Activated CD8-positive, alpha-beta T cell treated with anti-CD3 and anti-CD28 coated beads for 36 hours (primary cell): ENCODE measurements at regions of chr10 and their contacts with region 1.

Region 1: GRCh38 chr10:23702977-23703414 is 264.1 kb downstream of the OTUD1 start:
- DNase-seq: peak; percentile 78
- ATAC-seq: peak; percentile 90
- H3K4me3 Mint-ChIP-seq: no peak overlapping the region
- H3K27ac Mint-ChIP-seq: no peak overlapping the region
- H3K4me1 Mint-ChIP-seq: no peaks in the 10 kb centered on the region
- H3K27me3 Mint-ChIP-seq: peaks cover 19% of the 10 kb centered on the region
- CTCF ChIP-seq: peak; percentile 71

Region 2: GRCh38 chr10:23516530-23516929 is 186.5 kb before region 1 on chr10:
- CTCF ChIA-PET with region 1: interaction called, 12 read pairs
- POLR2A ChIA-PET with region 1: no interaction called
- intact Hi-C with region 1: loop called (anchors 5 kb)
- DNase-seq: no peak
- ATAC-seq: no peak
- H3K4me3 Mint-ChIP-seq: no peak overlapping the region
- H3K27ac Mint-ChIP-seq: no peak overlapping the region
- H3K4me1 Mint-ChIP-seq: peaks cover 23% of the 10 kb centered on the region
- H3K27me3 Mint-ChIP-seq: peaks cover 14% of the 10 kb centered on the region
- CTCF ChIP-seq: peak; percentile 49

Region 3: GRCh38 chr10:23535381-23535780 is 167.6 kb before region 1 on chr10:
- CTCF ChIA-PET with region 1: no interaction called
- POLR2A ChIA-PET with region 1: no interaction called
- intact Hi-C with region 1: loop called (anchors 5 kb)
- DNase-seq: no peak
- ATAC-seq: no peak
- H3K4me3 Mint-ChIP-seq: peak overlapping the region; percentile 33
- H3K27ac Mint-ChIP-seq: peak overlapping the region; percentile 78
- H3K4me1 Mint-ChIP-seq: peaks cover 72% of the 10 kb centered on the region
- H3K27me3 Mint-ChIP-seq: no peaks in the 10 kb centered on the region
- CTCF ChIP-seq: no peak

Region 4: DNA sequence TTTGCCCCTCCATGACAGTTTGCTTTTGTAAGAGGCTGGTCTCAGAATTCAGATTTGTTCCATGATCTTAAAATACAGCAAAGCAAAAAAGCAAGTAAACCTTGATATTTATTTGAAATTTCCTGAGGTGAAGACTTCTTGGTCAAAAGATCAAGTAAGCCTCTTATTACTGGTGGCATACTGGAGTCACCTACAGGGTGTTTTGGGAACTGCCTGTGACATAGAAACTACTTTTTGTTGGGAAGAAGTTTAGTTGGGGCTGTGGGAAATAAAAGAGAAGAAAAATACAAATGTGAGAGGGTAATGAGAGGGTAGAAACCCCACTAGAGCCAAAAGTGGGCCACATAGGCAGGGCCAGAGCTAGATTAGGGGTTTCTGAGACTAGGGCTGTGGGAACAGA is 46.3 kb before region 1 on chr10:
- CTCF ChIA-PET with region 1: no interaction called
- POLR2A ChIA-PET with region 1: no interaction called
- intact Hi-C with region 1: no loop called
- DNase-seq: peak; percentile 13
- ATAC-seq: no peak
- H3K4me3 Mint-ChIP-seq: no peak overlapping the region
- H3K27ac Mint-ChIP-seq: no peak overlapping the region
- H3K4me1 Mint-ChIP-seq: peaks cover 3% of the 10 kb centered on the region
- H3K27me3 Mint-ChIP-seq: peaks cover 6% of the 10 kb centered on the region
- CTCF ChIP-seq: peak; percentile 47